PC-3 (cell line): ENCODE measurements at regions of chr1 and their contacts with region 1.

Region 1: DNA sequence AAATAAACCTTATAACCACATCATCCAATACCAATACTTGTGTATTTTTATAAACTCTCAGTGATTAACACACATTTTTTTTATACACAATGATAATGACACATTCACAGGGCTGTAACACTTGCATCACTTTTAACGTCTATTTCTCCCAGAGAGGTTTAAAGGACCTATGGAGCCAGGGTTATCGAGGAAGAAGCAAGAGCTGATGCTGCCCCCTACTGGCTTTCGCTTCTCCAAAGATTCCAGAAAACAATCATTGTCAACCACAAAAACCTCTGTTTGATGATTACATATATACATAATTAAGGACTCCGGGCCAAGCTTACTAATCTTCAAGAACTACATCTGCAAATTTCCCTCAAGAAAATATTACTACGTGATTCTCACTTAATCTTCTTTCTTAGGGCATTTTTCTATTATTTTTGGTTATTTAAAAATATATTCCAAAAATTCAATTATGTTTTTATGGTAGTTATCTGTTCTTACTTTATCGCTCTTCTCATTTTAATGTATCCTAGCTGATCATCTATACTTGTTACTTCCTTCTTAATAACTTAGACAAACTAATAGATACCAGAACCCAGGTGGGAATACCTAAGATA is 214.5 kb downstream of the VAV3 start:
- DNase-seq: peak; percentile 85
- ATAC-seq: peak; percentile 68
- H3K4me3 ChIP-seq: no peak overlapping the region
- H3K27ac ChIP-seq: no peak overlapping the region
- H3K4me1 ChIP-seq: no peaks in the 10 kb centered on the region
- H3K27me3 ChIP-seq: no peaks in the 10 kb centered on the region
- CTCF ChIP-seq: peak; percentile 90

Region 2: DNA sequence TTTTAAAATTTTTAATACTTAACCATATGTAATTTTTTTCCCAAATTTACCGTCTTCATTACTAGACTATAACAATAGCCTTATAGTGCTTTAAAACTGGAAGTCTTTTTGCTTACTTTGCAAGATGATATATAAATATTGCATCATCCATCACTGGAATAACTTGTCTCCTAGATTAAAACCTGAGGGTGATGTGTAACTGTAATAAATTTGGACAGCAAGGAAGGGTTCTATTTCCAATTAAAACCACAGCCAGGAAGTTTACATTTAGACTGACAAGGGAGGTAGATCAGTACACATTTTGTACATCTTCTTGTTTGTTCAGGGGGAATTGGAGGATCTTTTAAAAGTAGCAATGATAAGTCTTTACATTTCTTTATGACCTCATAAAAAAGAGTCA is 587.7 kb before region 1 on chr1:
- CTCF ChIA-PET with region 1: no interaction called
- POLR2A ChIA-PET with region 1: no interaction called
- intact Hi-C with region 1: loop called (anchors 5 kb)
- DNase-seq: peak; percentile 78
- ATAC-seq: peak; percentile 96
- H3K4me3 ChIP-seq: no peak overlapping the region
- H3K27ac ChIP-seq: peak overlapping the region; percentile 20; the same call in 1 of the 2 replicates
- H3K4me1 ChIP-seq: peaks cover 10% of the 10 kb centered on the region
- H3K27me3 ChIP-seq: no peaks in the 10 kb centered on the region
- CTCF ChIP-seq: no peak

Region 3: DNA sequence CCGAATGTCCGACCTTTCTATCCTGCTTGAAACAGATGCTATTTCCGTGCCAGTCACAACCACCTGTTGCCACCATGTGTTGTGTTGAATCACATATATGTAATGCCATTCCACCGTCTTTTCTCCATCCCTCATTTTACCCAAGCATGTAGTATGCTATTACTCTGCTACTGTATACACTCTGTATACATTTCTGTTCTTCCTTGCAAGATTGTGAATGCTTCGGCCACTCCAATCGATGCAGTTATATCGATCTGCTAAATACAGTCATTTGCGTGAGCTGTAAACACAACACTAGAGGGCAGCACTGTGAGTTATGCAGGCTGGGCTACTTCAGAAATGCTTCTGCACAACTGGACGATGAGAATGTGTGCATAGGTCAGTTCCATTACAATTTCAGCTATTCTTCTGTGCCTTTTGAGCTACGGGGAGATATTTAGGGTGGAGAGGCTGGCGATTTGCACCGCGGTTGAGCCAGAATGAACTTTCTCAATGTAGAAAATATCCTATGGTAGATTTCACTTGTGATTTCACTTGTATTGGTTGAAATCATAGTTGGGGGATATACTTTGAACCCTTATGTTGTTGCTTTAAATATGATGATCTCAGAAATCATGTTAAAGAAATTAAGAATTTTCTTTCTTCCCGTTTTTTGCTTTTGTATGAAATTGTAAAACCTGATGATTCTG is 319.8 kb before region 1 on chr1:
- CTCF ChIA-PET with region 1: interaction called, 5 read pairs
- POLR2A ChIA-PET with region 1: no interaction called
- intact Hi-C with region 1: loop called (anchors 1 kb)
- DNase-seq: peak; percentile 75
- ATAC-seq: peak; percentile 73
- H3K4me3 ChIP-seq: no peak overlapping the region
- H3K27ac ChIP-seq: no peak overlapping the region
- H3K4me1 ChIP-seq: no peaks in the 10 kb centered on the region
- H3K27me3 ChIP-seq: no peaks in the 10 kb centered on the region
- CTCF ChIP-seq: peak; percentile 95

Region 4: GRCh38 chr1:107648071-107648470 is 102.4 kb before region 1 on chr1:
- CTCF ChIA-PET with region 1: no interaction called
- POLR2A ChIA-PET with region 1: no interaction called
- intact Hi-C with region 1: loop called (anchors 10 kb)
- DNase-seq: peak; percentile 91
- ATAC-seq: peak; percentile 99
- H3K4me3 ChIP-seq: no peak overlapping the region
- H3K27ac ChIP-seq: peak overlapping the region; percentile 58
- H3K4me1 ChIP-seq: peaks cover 24% of the 10 kb centered on the region
- H3K27me3 ChIP-seq: no peaks in the 10 kb centered on the region
- CTCF ChIP-seq: no peak

Region 5: DNA sequence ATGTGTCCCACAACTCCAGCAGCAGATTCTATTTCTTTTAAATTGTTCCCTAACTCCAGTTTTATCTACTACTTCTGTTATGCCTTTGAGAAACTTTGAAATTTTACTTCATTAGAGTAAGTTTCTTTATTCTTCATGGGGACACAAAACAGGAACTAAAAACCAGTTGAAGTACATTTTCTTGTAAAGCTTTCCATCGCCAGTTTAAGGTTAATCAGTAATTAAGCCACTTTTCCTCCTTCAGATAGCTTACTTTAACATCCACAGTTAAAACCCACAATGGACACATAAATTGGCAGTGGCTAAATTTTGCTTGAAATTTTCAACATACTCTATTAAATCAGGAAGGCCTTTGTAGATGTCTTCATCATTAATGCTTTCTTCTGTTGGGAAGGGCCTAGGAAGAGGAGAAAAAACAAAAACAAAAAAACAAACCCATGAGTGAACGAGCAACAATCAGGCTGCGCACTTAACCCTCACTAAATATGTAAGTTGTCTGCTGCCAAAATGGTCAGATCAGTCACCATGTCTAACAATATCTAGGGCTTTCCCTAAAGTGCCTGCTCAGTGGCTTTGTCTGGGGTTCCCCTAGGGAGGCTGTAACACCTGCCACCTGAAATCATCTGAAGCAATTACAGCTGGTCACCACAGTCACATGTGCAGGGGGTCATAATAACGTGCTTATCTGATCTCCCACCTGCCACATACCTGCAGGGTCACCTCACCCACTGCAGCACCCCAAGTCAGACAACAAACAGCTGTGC is 26.6 kb after region 1 on chr1:
- CTCF ChIA-PET with region 1: no interaction called
- POLR2A ChIA-PET with region 1: no interaction called
- intact Hi-C with region 1: no loop called
- DNase-seq: no peak
- ATAC-seq: no peak
- H3K4me3 ChIP-seq: no peak overlapping the region
- H3K27ac ChIP-seq: no peak overlapping the region
- H3K4me1 ChIP-seq: peaks cover 4% of the 10 kb centered on the region
- H3K27me3 ChIP-seq: no peaks in the 10 kb centered on the region
- CTCF ChIP-seq: no peak